ENCODE measurements at regions of chr7 and their contacts with region 1.

Region 1: DNA sequence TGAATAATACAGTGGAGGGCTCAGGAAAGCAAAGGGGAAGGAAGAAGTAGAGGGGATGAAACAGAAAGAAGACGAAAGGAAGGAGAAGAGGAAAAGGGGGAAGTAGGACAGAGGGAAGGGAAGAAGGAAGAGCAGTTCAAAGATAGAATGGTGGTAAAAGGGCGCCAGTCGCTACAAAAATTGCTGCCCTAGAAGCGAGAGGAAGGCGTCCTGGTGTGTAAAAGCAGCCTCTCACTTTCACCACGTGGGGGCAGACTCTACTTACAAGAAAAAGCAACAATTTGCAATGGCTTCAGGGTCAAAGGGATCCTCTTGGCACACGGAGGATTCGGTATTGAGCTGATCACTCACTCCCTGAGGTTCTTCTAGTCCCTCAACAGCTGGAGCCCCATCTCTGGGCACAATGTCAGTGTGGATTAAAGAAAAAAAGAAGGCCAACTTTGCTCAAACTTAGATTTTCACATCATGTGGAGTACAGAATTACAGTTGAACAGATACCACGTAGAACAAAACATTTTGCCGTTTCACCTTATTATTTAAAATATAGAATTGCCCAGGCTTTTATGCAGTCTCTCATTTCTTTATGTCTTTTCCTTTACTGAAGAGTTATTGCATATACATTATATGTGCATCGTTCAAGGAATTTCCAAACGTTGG is 31.4 kb upstream of the NPVF start:
- DNase-seq: peak; percentile 49
- ATAC-seq: peak; percentile 76 to 83
- H3K4me3 ChIP-seq: no peak overlapping the region
- H3K27ac ChIP-seq: no peak overlapping the region
- H3K4me1 ChIP-seq: peaks cover 18% of the 10 kb centered on the region
- H3K27me3 ChIP-seq: no peaks in the 10 kb centered on the region
- CTCF ChIP-seq: peak; percentile 83

Region 2: DNA sequence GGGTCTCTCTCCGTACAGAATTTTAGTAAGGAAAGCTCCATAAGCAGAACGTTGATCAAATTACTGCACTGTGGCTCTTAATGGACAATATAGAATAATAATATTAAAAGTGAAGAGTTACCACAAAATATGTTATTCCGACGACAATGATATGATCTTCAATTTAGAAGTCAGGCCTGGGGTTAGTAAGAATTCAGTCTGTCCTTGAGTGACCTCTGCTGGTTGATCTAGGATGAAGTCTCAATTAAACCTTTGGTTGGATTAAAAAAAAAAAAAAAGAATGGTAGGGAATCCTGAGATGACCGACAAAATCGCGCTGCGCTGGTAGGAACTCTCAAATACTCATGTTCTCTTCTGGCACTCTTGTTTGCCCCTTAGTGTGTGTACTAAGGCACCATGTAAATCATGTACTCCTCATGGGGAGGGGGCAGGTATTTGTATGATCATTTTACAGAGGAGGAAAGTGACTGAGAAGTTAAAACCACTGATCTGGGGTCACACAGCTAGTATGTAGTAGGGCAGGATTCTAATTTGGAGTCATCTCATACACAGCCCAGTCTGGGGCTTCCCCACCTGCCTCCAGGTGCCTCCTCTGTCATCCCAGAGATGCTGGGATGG is 129.9 kb after region 1 on chr7:
- intact Hi-C with region 1: loop called (anchors 10 kb)
- DNase-seq: no peak
- ATAC-seq: no peak
- H3K4me3 ChIP-seq: no peak overlapping the region
- H3K27ac ChIP-seq: no peak overlapping the region
- H3K4me1 ChIP-seq: peaks cover 9% of the 10 kb centered on the region
- H3K27me3 ChIP-seq: no peaks in the 10 kb centered on the region
- CTCF ChIP-seq: peak; percentile 44

Region 3: GRCh38 chr7:25565949-25566348 is 306.2 kb after region 1 on chr7:
- intact Hi-C with region 1: loop called (anchors 5 kb)
- DNase-seq: peak; percentile 60
- ATAC-seq: peak in 1 of 2 donors; percentile 52
- H3K4me3 ChIP-seq: no peak overlapping the region
- H3K27ac ChIP-seq: no peak overlapping the region
- H3K4me1 ChIP-seq: peaks cover 21% of the 10 kb centered on the region
- H3K27me3 ChIP-seq: no peaks in the 10 kb centered on the region
- CTCF ChIP-seq: peak; percentile 100

Region 4: GRCh38 chr7:25851332-25852210 is 591.9 kb after region 1 on chr7:
- intact Hi-C with region 1: loop called (anchors 10 kb)
- DNase-seq: peak; percentile 78
- ATAC-seq: peak; percentile 89 to 90
- H3K4me3 ChIP-seq: peak overlapping the region; percentile 27
- H3K27ac ChIP-seq: peak overlapping the region; percentile 61
- H3K4me1 ChIP-seq: peaks cover 42% of the 10 kb centered on the region
- H3K27me3 ChIP-seq: peaks cover 60% of the 10 kb centered on the region
- CTCF ChIP-seq: peak; percentile 85

Measured in lower lobe of right lung (tissue), 2 donors.